Breast epithelium (tissue), 4 donors: ENCODE measurements at regions of chr12 and their contacts with region 1.

Region 1: GRCh38 chr12:105418232-105418631 is 87.7 kb downstream of the C12orf75 start:
- DNase-seq: no peak
- H3K4me3 ChIP-seq: no peak overlapping the region
- H3K27ac ChIP-seq: no peak overlapping the region
- H3K4me1 ChIP-seq: no peaks in the 10 kb centered on the region
- H3K27me3 ChIP-seq: no peaks in the 10 kb centered on the region
- CTCF ChIP-seq: no peak
- POLR2A ChIP-seq: no peak

Region 2: DNA sequence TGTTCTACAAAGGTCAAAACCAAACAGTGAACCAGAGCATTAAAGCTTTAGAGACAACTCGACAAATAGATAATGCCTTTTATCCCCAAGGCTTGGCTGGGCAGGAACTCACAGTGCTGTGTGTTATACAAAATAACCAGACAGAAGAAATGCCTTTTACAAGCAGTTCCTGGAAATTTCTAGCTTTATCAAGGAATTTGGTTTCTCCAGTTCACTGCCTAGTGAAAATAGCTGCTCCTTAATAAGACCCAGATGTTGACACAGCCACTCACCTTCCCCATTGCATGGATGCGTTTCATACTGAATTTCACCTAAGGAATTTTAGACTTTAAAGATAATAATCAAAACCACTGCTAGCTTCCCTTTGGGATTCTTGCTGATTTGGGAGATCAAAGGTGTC is 74.4 kb after region 1 on chr12:
- intact Hi-C with region 1: no loop called
- DNase-seq: no peak
- H3K4me3 ChIP-seq: no peak overlapping the region
- H3K27ac ChIP-seq: no peak overlapping the region
- H3K4me1 ChIP-seq: no peaks in the 10 kb centered on the region
- H3K27me3 ChIP-seq: no peaks in the 10 kb centered on the region
- CTCF ChIP-seq: no peak
- POLR2A ChIP-seq: no peak

Region 3: DNA sequence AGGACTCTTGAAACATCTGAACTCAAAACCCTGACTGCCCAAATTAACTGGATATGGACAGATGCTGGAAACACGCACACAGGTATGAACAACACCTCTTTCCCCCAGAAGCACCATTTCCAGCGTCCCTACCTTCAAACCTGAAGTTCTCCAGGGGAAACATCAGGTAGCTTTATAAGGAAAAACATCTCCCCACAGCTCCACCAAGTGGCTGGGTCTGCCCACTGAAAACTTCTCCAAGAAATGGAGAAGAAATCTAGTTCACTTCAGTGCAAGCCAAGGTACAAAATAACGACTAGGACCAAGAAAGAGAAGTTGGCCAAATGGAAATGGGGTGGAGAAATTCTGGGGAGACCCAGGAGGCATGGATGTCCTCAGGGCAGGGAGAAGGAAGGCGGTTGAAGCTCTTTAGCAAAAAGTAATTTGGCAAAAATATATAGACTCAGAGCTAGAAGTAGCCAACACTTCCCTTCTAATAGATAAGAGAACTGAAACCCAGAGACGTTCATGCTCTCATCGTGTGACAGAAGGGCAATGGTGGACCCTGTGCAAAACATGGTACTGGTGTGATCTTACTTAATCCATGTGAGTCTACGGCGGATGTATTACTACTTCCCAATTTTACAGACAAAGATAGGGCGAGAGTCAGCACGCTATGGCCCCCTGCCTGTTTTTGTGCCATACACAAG is 731.0 kb after region 1 on chr12:
- intact Hi-C with region 1: loop called (anchors 5 kb)
- DNase-seq: no peak
- H3K4me3 ChIP-seq: no peak overlapping the region
- H3K27ac ChIP-seq: no peak overlapping the region
- H3K4me1 ChIP-seq: no peaks in the 10 kb centered on the region
- H3K27me3 ChIP-seq: no peaks in the 10 kb centered on the region
- CTCF ChIP-seq: peak in 2 of 3 donors; percentile 39 to 41
- POLR2A ChIP-seq: no peak